BJ (cell line): ENCODE measurements at regions of chr1 and their contacts with region 1.

Region 1: GRCh38 chr1:160739098-160739511 is at the start of gene SLAMF7:
- DNase-seq: no peak
- H3K4me3 ChIP-seq: no peak within 1 kb of the TSS
- H3K27me3 ChIP-seq: no peaks in the 10 kb centered on the region
- CTCF ChIP-seq: no peak
- polyA plus RNA-seq, gene SLAMF7: not detected in 2 replicates

Region 2: GRCh38 chr1:160726498-160727315 is 12.4 kb before region 1 on chr1:
- CTCF ChIA-PET with region 1: interaction called, 10 read pairs
- POLR2A ChIA-PET with region 1: no interaction called
- DNase-seq: no peak
- H3K4me3 ChIP-seq: no peak overlapping the region
- H3K27me3 ChIP-seq: no peaks in the 10 kb centered on the region
- CTCF ChIP-seq: peak; percentile 72

Region 3: DNA sequence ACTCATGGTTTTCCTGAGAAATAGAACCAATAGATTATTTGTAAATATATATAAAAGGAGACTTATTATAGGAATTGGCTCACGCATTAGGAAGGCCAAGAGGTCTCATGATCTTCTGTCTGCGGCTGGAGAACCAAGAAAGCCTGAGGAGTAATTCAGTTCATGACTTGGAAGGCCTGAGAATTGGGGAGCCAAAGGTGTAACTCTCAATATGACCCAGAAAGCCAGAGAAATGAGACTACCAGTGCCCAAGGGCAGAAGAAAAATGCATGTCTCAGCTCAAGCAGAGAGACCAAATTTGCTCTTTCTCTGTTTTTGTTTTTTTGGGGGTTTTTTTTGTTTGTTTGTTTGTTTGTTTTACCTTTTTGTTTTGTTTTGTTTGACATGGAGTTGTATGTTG is 19.4 kb after region 1 on chr1:
- CTCF ChIA-PET with region 1: no interaction called
- POLR2A ChIA-PET with region 1: no interaction called
- DNase-seq: no peak
- H3K4me3 ChIP-seq: no peak overlapping the region
- H3K27me3 ChIP-seq: no peaks in the 10 kb centered on the region
- CTCF ChIP-seq: no peak

Region 4: DNA sequence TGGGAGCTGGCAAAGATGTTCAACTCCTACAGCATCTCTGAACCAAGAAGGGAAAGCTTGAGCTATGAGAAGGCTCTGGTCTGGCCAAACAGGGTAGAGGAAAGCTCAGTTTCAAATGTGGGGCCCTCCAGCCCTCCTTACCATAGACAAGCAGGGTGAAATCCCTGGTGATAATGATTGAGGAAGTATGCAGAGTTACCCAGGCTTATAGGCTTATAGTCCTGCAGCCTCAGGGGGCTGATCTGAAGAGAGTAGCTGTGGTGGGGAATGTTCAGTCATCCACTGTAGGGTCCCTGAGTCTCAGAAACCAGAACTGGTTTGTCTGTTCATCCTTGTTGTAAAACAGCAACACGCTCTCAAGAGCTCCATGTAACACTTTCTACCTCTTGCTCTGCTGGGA is 37.1 kb after region 1 on chr1:
- CTCF ChIA-PET with region 1: no interaction called
- POLR2A ChIA-PET with region 1: no interaction called
- DNase-seq: no peak
- H3K4me3 ChIP-seq: no peak overlapping the region
- H3K27me3 ChIP-seq: no peaks in the 10 kb centered on the region; the same call in 1 of the 2 replicates
- CTCF ChIP-seq: no peak

Region 5: GRCh38 chr1:161021165-161021960 is 282.3 kb after region 1 on chr1:
- CTCF ChIA-PET with region 1: no interaction called
- POLR2A ChIA-PET with region 1: no interaction called
- DNase-seq: no peak
- H3K4me3 ChIP-seq: peak overlapping the region; percentile 32
- H3K27me3 ChIP-seq: peaks cover 21% of the 10 kb centered on the region
- CTCF ChIP-seq: no peak